GM10248 (cell line): ENCODE measurements at regions of chr7 and their contacts with region 1.

Region 1: DNA sequence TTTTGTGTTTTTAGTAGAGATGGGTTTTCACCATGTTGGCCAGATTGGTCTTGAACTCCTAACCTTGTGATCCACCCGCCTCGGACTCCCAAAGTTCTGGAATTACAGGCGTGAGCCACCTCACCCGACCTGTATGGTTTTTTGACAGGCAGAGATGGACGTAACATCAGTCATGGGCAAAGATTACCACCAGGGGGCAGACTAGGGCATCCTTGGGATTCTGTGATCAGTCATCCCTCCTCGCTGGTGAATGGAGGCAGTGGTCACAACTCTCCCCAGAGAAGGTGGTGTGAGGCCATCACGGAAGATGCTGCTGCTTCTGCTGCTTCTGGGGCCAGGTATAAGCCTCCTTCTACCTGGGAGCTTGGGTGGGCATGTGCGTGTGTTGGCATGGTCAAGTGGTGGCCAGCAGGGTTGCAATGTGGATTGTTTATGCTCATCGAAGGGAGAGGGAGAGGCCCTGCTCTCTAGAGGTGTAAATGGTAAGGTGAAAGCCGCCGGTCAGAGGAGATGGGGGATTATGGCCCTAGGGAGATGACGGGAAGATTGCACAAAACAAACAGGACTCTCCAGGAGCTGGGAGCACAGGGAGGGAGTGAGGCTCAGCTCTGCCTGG is 122.7 kb upstream of the PRSS1 start:
- DNase-seq: peak; percentile 49
- CTCF ChIP-seq: peak; percentile 61

Region 2: DNA sequence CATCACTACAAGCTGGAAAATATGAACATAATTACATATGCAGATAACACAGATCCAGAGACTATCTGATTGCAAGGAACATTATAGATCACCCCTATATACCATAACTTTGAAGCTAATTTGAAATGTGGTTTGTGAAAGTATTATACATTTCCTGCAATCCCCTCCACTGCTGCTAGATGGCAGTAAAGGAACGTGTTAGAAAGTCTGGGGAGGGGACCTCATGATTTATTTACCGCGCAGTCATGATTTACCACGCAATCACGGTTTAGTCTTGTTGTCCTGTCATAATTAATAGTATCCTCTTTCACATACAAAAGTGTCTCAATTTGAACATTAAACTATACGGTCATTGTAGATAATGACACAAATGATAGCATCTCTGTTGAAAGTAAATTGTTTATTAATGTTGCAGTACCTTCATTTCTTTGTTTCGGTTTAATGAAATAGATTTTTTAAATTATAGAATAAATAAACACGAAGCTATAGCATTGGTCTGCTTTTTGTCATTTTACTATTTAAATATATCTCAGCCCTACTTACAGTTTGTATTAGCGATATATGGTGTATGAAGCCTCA is 22.6 kb before region 1 on chr7:
- CTCF ChIA-PET with region 1: interaction called, 18 read pairs
- POLR2A ChIA-PET with region 1: no interaction called
- DNase-seq: peak; percentile 62
- CTCF ChIP-seq: peak; percentile 81

Region 3: DNA sequence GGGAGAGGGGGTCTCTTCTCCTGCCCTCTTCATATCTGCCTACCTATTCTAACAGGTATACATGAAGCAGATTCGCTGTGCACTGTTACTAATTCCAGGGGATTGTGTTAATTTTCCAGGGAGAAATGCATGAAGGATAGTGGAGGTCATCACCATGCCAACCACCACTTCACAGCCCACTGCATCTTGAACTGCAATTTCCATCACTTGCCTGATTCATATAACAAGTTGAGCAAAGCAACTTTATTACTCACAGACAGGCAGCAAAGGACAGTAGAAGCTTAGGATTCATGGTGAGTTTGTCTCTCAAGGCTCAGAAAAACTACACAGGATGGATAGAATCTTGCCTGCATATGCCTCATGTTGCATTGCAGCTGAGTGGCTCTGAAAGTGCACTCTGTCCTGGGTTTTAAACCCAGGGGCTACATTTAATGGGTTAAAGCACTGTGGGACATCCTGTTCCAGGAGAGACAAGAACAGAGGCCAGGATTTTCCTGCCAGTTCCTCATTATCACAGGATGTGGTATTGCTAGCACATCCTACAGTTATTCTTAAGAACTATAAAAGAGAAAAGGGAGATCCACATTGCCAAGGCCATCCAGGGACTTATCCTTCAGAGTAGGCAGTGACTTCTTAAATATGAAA is 14.2 kb before region 1 on chr7:
- CTCF ChIA-PET with region 1: interaction called, 13 read pairs
- POLR2A ChIA-PET with region 1: no interaction called
- DNase-seq: no peak
- CTCF ChIP-seq: no peak

Region 4: GRCh38 chr7:142788303-142789289 is 162.1 kb after region 1 on chr7:
- CTCF ChIA-PET with region 1: interaction called, 214 read pairs
- POLR2A ChIA-PET with region 1: no interaction called
- DNase-seq: no peak
- CTCF ChIP-seq: no peak